Gastrocnemius medialis (tissue), 4 donors: ENCODE measurements at regions of chr6 and their contacts with region 1.

Region 1: GRCh38 chr6:138987640-138988468 is at the start of gene REPS1:
- DNase-seq: peak; percentile 80 to 87
- ATAC-seq: peak; percentile 93 to 94
- H3K4me3 ChIP-seq: peak within 1 kb of the TSS; percentile 85 to 96 (median 94)
- H3K27ac ChIP-seq: peak within 1 kb of the TSS; percentile 86 to 90 (median 88)
- H3K4me1 ChIP-seq: peaks cover 24 to 35% of the 10 kb centered on the region in 2 donors
- H3K27me3 ChIP-seq: no peaks in the 10 kb centered on the region
- CTCF ChIP-seq: peak; percentile 86 to 99 (median 98)
- POLR2A ChIP-seq: peak; percentile 60 to 70
- total RNA-seq, gene REPS1: 14.8 to 21.6 (median 17.4) TPM

Region 2: DNA sequence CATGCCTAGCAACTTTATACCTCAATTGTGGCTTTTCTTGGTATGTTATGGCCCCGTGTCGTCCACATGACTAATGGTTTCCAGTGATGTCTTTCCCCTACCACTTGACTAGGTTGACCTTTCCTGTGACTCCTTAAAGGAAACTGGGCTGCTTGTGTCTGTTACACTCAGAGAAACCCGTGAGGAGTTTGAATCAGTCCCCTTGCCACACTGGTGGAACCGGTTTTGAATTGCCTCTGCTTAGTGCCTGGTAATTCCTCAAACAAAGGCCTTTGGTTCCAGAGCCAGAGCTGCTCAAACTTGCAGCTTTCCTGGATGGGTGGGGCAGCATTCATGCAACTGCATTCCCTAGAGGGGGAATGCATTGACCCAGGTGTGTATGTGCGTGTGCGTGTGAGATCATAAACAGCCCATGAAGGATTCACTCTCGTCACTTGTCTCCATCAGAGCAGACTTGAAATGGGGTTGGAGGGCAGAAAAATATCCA is 170.0 kb before region 1 on chr6:
- in situ Hi-C with region 1: loop called in 3 of 4 experiments (anchors 5 to 10 kb)
- intact Hi-C with region 1: loop called (anchors 1 kb)
- DNase-seq: no peak
- ATAC-seq: no peak
- H3K4me3 ChIP-seq: no peak overlapping the region
- H3K27ac ChIP-seq: no peak overlapping the region
- H3K4me1 ChIP-seq: no peaks in the 10 kb centered on the region
- H3K27me3 ChIP-seq: no peaks in the 10 kb centered on the region
- CTCF ChIP-seq: no peak
- POLR2A ChIP-seq: no peak

Region 3: DNA sequence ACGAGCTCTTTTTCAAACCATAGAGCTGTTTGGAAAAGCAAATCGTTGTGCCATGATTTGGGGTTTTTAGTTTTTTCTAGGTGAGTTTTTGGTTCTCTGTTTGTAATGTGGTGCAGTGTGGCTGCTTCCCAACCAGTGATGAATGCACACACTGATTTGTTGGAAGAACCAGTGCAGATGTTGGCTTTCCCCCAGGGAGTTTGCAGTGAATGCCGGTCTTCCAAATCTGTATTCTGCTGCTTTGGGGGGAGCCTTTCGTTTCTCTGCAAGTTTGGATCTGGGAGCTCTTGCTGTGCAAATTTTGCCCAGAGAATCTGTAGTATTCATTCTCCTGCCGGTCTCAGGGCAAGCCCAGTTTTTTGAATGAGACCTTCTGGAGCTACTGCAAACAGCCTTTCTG is 161.5 kb after region 1 on chr6:
- in situ Hi-C with region 1: no loop called
- intact Hi-C with region 1: loop called (anchors 5 kb)
- DNase-seq: no peak
- ATAC-seq: no peak
- H3K4me3 ChIP-seq: no peak overlapping the region
- H3K27ac ChIP-seq: no peak overlapping the region
- H3K4me1 ChIP-seq: peaks cover 69 to 70% of the 10 kb centered on the region in 2 donors
- H3K27me3 ChIP-seq: no peaks in the 10 kb centered on the region
- CTCF ChIP-seq: no peak
- POLR2A ChIP-seq: no peak